IMR-90 (cell line): ENCODE measurements at regions of chr3 and their contacts with region 1.

Region 1: GRCh38 chr3:112778391-112778948 is 68.2 kb downstream of the CD200R1L start:
- DNase-seq: peak; percentile 90
- ATAC-seq: peak; percentile 52
- H3K4me3 ChIP-seq: no peak overlapping the region
- H3K27ac ChIP-seq: peak overlapping the region; percentile 98; the same call in 1 of the 2 replicates
- H3K4me1 ChIP-seq: peaks cover 41% of the 10 kb centered on the region
- H3K27me3 ChIP-seq: no peaks in the 10 kb centered on the region
- CTCF ChIP-seq: no peak
- POLR2A ChIP-seq: no peak
- RAD21 ChIP-seq: no peak

Region 2: DNA sequence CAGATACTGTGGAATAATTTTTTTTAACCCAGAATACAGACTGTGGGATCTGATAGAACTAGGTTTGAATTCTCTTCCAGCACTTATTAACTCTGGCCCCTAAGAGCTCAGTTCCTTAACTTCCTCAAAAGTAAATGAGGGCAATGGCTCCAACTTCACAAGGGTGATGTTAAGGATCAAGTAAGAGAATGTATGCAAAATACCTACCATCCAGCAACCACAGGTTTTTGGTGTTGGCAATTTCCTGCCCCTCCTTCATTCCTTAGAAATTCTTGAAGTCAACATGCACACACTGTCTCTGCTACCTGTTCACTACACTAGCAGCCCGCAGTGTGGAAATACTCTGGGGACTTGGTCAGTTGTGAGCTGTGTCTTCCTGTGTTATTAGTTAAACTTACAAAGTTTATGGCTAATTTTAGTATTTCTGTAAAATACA is 1188.4 kb before region 1 on chr3:
- CTCF ChIA-PET with region 1: interaction called, 12 read pairs
- POLR2A ChIA-PET with region 1: no interaction called
- dilution Hi-C with region 1: no loop called
- in situ Hi-C with region 1: no loop called
- intact Hi-C with region 1: no loop called
- DNase-seq: no peak
- ATAC-seq: no peak
- H3K4me3 ChIP-seq: no peak overlapping the region
- H3K27ac ChIP-seq: no peak overlapping the region
- H3K4me1 ChIP-seq: peaks cover 22% of the 10 kb centered on the region
- H3K27me3 ChIP-seq: no peaks in the 10 kb centered on the region
- CTCF ChIP-seq: no peak
- POLR2A ChIP-seq: no peak
- RAD21 ChIP-seq: no peak